ENCODE measurements at regions of chr16 and their contacts with region 1.

Region 1: DNA sequence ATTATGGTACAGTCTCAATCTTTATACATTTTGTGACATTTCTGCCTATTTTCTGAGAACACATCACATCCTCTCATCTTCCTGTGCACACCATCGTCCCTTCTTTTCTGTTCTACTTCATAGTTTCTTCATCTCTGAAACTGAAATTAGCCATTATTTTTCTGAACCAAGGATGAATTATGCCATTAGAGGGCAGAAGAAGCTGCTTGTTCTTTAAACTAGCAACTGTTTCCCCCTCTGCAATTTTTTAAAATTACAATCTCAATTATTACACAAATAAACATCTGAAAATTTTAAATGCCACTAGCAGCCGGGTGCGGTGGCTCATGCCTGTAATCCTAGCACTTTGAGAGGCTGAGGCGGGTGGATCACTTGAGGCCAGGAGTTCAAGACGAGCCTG is 41.3 kb downstream of the RBBP6 start:
- DNase-seq: peak; percentile 35
- H3K4me3 Mint-ChIP-seq: no peak overlapping the region
- H3K27ac Mint-ChIP-seq: peak overlapping the region; percentile 27
- H3K4me1 Mint-ChIP-seq: peaks cover 10% of the 10 kb centered on the region
- H3K27me3 Mint-ChIP-seq: no peaks in the 10 kb centered on the region
- CTCF ChIP-seq: peak; percentile 59

Region 2: GRCh38 chr16:24491726-24492125 is 88.9 kb before region 1 on chr16:
- CTCF ChIA-PET with region 1: no interaction called
- POLR2A ChIA-PET with region 1: no interaction called
- intact Hi-C with region 1: no loop called
- DNase-seq: peak; percentile 46
- H3K4me3 Mint-ChIP-seq: no peak overlapping the region
- H3K27ac Mint-ChIP-seq: peak overlapping the region; percentile 75
- H3K4me1 Mint-ChIP-seq: peaks cover 12% of the 10 kb centered on the region
- H3K27me3 Mint-ChIP-seq: no peaks in the 10 kb centered on the region
- CTCF ChIP-seq: no peak

Region 3: DNA sequence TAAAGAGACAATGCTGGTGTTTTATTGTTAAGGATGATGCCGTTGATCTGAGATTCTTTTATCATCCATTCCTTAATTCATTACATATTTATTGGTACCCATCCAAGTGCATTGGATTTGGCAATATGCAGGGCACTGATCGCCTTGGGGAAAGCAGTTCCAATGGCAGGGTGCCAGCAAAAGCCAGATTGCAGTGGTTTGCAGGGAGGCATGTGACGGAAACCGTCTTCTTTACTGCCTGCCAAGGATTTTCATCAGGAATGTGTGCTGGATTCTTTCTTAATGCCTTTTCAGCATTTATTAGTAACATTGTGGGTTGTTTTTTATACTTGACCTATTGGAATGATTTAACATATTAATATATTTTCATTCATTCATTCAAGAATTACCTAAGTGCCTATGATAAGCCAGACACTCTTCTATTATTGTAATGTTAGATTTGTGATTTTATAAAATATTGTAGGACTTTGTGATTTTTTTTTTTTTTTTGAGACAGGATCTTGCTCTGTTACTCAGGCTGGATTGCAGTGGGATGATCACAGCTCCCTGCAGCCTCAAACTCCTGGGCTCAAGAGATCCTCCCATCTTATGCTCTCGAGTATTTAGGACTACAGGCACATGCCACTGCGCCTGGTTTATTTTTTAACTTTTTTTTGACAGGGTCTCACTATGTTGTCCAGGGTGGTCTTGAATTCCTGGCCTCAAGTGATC is 55.4 kb after region 1 on chr16:
- CTCF ChIA-PET with region 1: no interaction called
- POLR2A ChIA-PET with region 1: no interaction called
- intact Hi-C with region 1: no loop called
- DNase-seq: peak; percentile 95
- H3K4me3 Mint-ChIP-seq: no peak overlapping the region
- H3K27ac Mint-ChIP-seq: peak overlapping the region; percentile 33
- H3K4me1 Mint-ChIP-seq: peaks cover 11% of the 10 kb centered on the region
- H3K27me3 Mint-ChIP-seq: no peaks in the 10 kb centered on the region
- CTCF ChIP-seq: no peak

Region 4: DNA sequence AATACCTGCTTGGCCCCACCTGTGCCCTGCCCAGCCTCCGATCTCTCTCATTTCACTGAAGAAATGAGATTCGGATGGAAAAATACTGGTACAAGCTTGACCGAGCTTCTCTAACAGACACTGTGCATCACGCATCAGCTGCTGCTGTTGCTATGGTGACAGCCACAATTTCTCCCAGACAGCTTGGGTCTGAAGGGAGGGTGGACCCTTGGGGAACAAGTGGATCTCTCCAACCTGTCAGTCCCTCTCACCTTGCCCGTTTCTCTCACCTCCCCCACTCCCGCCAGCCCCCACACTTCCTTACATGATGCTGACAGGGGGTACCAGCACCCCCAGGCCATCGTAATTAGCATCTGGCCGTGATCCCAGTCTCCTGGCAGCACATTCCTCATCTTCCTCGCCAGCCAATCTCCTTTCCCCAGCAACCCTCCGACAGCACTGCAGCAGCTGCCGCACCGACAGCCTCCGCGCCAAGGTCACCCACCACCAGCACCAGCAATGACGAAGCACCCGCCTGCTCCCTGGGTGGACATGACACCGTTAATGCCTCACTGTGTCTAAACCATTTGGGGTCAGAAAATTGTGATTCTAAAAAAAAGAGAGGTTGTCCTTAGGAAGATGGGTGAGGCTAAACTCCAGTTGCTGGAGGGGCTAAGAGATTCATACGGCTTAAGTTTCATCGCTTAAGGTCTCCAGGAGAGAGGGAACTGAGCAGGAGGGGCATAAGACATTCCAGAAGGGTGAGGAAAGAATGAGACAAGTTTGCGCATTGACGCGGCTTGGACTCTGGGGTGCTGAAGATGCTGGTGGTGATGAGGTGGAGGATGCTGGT is 90.2 kb after region 1 on chr16:
- CTCF ChIA-PET with region 1: interaction called, 4 read pairs
- POLR2A ChIA-PET with region 1: interaction called, 3 read pairs
- intact Hi-C with region 1: loop called (anchors 1 kb)
- DNase-seq: peak; percentile 29
- H3K4me3 Mint-ChIP-seq: no peak overlapping the region
- H3K27ac Mint-ChIP-seq: peak overlapping the region; percentile 82
- H3K4me1 Mint-ChIP-seq: peaks cover 14% of the 10 kb centered on the region
- H3K27me3 Mint-ChIP-seq: no peaks in the 10 kb centered on the region
- CTCF ChIP-seq: no peak

Region 5: DNA sequence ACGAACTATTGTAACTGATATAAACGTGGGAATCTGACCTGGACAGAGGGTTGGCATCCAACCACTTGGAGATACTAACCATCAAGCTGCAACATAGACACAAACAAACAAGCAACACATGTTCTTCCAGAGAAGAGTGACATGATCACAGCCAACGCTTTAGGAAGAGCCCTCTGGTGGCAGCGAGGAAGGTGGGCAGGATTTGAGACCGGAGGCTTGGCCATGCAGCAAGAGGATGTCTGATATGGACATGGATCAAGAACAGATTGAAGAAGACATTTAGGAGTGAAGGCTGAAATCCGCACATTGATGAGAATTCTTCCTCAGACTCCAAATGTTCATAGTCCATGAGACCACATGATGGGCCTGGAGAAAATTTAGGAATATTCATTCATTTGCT is 108.5 kb after region 1 on chr16:
- CTCF ChIA-PET with region 1: interaction called, 3 read pairs
- POLR2A ChIA-PET with region 1: no interaction called
- intact Hi-C with region 1: loop called (anchors 1 kb)
- DNase-seq: peak; percentile 45
- H3K4me3 Mint-ChIP-seq: no peak overlapping the region
- H3K27ac Mint-ChIP-seq: no peak overlapping the region
- H3K4me1 Mint-ChIP-seq: no peaks in the 10 kb centered on the region
- H3K27me3 Mint-ChIP-seq: no peaks in the 10 kb centered on the region
- CTCF ChIP-seq: peak; percentile 31

Region 6: GRCh38 chr16:24776501-24777220 is 196.0 kb after region 1 on chr16:
- CTCF ChIA-PET with region 1: interaction called, 4 read pairs
- POLR2A ChIA-PET with region 1: no interaction called
- intact Hi-C with region 1: loop called (anchors 10 kb)
- DNase-seq: no peak
- H3K4me3 Mint-ChIP-seq: no peak overlapping the region
- H3K27ac Mint-ChIP-seq: peak overlapping the region; percentile 40
- H3K4me1 Mint-ChIP-seq: peaks cover 20% of the 10 kb centered on the region
- H3K27me3 Mint-ChIP-seq: no peaks in the 10 kb centered on the region
- CTCF ChIP-seq: no peak